ENCODE measurements at regions of chr16 and their contacts with region 1.

Region 1: GRCh38 chr16:58755989-58756649 is 22.0 kb upstream of the GOT2 start:
- DNase-seq: peak; percentile 79
- ATAC-seq: peak; percentile 95

Region 2: GRCh38 chr16:58678716-58679115 is 77.4 kb before region 1 on chr16:
- intact Hi-C with region 1: loop called (anchors 5 kb)
- DNase-seq: peak; percentile 58
- ATAC-seq: peak; percentile 55

Measured in Right ventricle myocardium superior (tissue), 1 donor.